Mammary epithelial cell (primary cell): ENCODE measurements at regions of chr14 and their contacts with region 1.

Region 1: DNA sequence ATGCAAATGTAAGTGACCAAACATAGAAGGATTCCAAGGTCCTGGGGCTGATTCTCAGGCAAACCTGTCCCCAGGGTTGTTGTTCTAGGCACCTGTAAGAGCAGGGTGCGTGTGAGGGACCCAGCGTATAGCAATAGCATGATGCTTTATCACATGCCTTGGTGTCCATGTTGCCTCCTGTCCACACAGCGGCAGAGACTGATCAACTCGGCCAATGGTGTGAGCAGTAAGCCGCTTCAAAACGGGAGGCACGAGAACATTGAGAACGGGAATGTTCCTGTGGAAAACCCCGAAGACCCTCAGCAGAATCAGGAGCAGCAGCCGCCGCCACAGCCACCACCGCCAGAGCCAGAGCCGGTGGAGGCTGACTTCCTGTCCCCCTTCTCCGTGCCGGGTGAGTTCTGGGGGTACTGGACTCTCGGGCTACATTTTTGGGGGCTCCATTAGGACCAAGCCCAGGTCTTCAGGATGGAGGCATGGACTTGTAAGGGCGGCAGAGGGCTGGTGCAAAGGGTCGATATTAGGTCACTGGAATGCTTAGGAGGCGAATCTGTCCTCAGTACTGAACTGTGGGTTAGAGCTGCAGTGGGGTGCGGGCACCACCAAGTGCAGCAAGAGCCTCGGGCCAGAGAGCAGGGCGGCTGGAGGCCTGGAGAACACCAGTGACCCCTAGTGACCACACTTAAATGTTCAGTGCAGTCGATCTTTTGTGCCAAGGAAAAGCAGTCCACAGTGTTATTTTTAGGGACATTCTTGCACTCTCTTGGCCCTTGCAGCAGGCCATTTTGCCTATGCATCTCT is 57.2 kb upstream of the RIN3 start:
- DNase-seq: peak; percentile 25
- H3K4me3 ChIP-seq: no peak overlapping the region
- H3K27ac ChIP-seq: no peak overlapping the region
- H3K4me1 ChIP-seq: no peaks in the 10 kb centered on the region
- H3K27me3 ChIP-seq: no peaks in the 10 kb centered on the region
- CTCF ChIP-seq: peak; percentile 38 to 49

Region 2: DNA sequence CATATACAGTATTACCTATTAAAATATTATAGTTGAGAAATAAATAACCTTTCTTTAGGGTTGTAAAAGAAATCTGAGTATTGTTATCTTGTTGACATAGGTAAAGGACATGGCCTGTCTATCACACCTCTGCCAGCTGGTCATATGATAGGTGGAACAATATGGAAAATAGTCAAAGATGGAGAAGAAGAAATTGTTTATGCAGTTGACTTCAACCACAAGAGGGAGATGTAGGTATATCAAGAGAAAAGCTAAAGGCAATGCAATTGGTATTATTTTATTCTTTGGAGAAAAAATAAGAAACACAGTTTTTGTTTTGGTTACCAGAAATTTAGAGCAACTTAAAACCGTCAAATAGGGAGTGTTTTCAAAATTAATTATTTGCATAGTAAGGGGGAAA is 321.1 kb before region 1 on chr14:
- CTCF ChIA-PET with region 1: interaction called, 4 read pairs
- dilution Hi-C with region 1: no loop called
- in situ Hi-C with region 1: no loop called
- intact Hi-C with region 1: loop called (anchors 1 kb)
- DNase-seq: peak; percentile 4
- H3K4me3 ChIP-seq: no peak overlapping the region
- H3K27ac ChIP-seq: no peak overlapping the region
- H3K4me1 ChIP-seq: no peaks in the 10 kb centered on the region
- H3K27me3 ChIP-seq: no peaks in the 10 kb centered on the region
- CTCF ChIP-seq: peak; percentile 26 to 55

Region 3: GRCh38 chr14:92224358-92224954 is 232.0 kb before region 1 on chr14:
- CTCF ChIA-PET with region 1: no interaction called
- dilution Hi-C with region 1: no loop called
- in situ Hi-C with region 1: no loop called
- intact Hi-C with region 1: no loop called
- DNase-seq: no peak
- H3K4me3 ChIP-seq: no peak overlapping the region
- H3K27ac ChIP-seq: no peak overlapping the region
- H3K4me1 ChIP-seq: no peaks in the 10 kb centered on the region
- H3K27me3 ChIP-seq: no peaks in the 10 kb centered on the region
- CTCF ChIP-seq: no peak